ENCODE measurements at regions of chr6 and their contacts with region 1.

Region 1: DNA sequence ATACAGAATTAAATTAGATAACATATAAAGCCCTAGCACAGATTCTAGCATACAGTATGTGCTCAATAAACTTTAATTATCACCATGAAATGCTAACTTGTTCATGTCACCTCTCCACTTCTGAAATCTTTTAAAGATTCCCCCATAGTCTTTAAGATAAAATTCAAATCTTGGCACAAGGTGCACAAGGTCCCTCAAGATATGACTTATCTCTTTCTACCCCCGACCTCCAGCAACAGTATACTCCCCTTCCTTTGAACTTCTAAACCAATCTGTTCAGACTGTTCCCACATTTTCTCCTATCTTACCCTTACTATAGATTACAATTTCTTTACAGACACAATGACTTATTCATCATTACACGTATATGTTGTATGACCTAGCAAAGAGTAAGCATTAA is 29.0 kb downstream of the SEC63 start:
- DNase-seq: no peak
- ATAC-seq: no peak
- H3K4me3 ChIP-seq: no peak overlapping the region
- H3K4me3 Mint-ChIP-seq: no peak overlapping the region
- H3K27ac ChIP-seq: no peak overlapping the region
- H3K27ac Mint-ChIP-seq: no peak overlapping the region
- H3K4me1 ChIP-seq: no peaks in the 10 kb centered on the region
- H3K4me1 Mint-ChIP-seq: peaks cover 27% of the 10 kb centered on the region
- H3K27me3 ChIP-seq: no peaks in the 10 kb centered on the region
- H3K27me3 Mint-ChIP-seq: no peaks in the 10 kb centered on the region
- CTCF ChIP-seq: no peak

Region 2: GRCh38 chr6:107941627-107942026 is 12.6 kb after region 1 on chr6:
- CTCF ChIA-PET with region 1: no interaction called
- POLR2A ChIA-PET with region 1: no interaction called
- intact Hi-C with region 1: loop called in 1 of 2 experiments (anchors 1 kb)
- DNase-seq: no peak
- ATAC-seq: no peak
- H3K4me3 ChIP-seq: no peak overlapping the region
- H3K4me3 Mint-ChIP-seq: no peak overlapping the region
- H3K27ac ChIP-seq: no peak overlapping the region
- H3K27ac Mint-ChIP-seq: no peak overlapping the region
- H3K4me1 ChIP-seq: peaks cover 12% of the 10 kb centered on the region
- H3K4me1 Mint-ChIP-seq: peaks cover 56% of the 10 kb centered on the region
- H3K27me3 ChIP-seq: no peaks in the 10 kb centered on the region
- H3K27me3 Mint-ChIP-seq: no peaks in the 10 kb centered on the region
- CTCF ChIP-seq: no peak

Region 3: GRCh38 chr6:108193120-108193519 is 264.1 kb after region 1 on chr6:
- CTCF ChIA-PET with region 1: no interaction called
- POLR2A ChIA-PET with region 1: no interaction called
- intact Hi-C with region 1: no loop called
- DNase-seq: no peak
- ATAC-seq: no peak
- H3K4me3 ChIP-seq: no peak overlapping the region
- H3K4me3 Mint-ChIP-seq: no peak overlapping the region
- H3K27ac ChIP-seq: no peak overlapping the region
- H3K27ac Mint-ChIP-seq: no peak overlapping the region
- H3K4me1 ChIP-seq: no peaks in the 10 kb centered on the region
- H3K4me1 Mint-ChIP-seq: no peaks in the 10 kb centered on the region
- H3K27me3 ChIP-seq: peaks cover 0 to 4% of the 10 kb centered on the region in 2 experiments
- H3K27me3 Mint-ChIP-seq: peaks cover 14% of the 10 kb centered on the region
- CTCF ChIP-seq: no peak